AG04450 (cell line): ENCODE measurements at regions of chr15 and their contacts with region 1.

Region 1: GRCh38 chr15:72722071-72722696 is 36.2 kb downstream of the BBS4 start:
- DNase-seq: peak; percentile 47
- H3K4me3 ChIP-seq: no peak overlapping the region
- H3K27ac ChIP-seq: no peak overlapping the region
- H3K27me3 ChIP-seq: no peaks in the 10 kb centered on the region
- CTCF ChIP-seq: peak; percentile 79

Region 2: DNA sequence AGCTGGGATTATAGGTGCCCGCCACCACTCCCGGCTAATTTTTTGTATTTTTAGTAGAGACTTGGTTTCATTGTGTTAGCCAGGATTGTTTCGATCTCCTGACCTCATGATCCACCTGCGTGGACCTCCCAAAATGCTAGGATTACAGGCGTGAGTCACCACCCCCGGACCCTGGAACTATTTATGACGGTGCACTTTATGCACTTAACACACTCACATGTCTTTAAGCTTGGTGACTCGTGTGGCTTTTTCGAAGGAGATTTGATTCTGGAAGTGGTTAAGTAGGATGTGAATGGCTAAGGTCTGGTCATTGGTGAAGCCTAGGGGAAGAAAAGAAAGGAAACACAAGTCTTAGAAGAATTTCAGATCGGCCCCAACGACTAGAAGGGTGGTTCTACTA is 15.9 kb before region 1 on chr15:
- CTCF ChIA-PET with region 1: interaction called, 24 read pairs
- POLR2A ChIA-PET with region 1: interaction called, 4 read pairs
- DNase-seq: no peak
- H3K4me3 ChIP-seq: no peak overlapping the region
- H3K27ac ChIP-seq: no peak overlapping the region
- H3K27me3 ChIP-seq: no peaks in the 10 kb centered on the region
- CTCF ChIP-seq: no peak

Region 3: GRCh38 chr15:72740219-72740618 is 18.0 kb after region 1 on chr15:
- CTCF ChIA-PET with region 1: interaction called, 73 read pairs
- POLR2A ChIA-PET with region 1: no interaction called
- DNase-seq: no peak
- H3K4me3 ChIP-seq: no peak overlapping the region
- H3K27ac ChIP-seq: no peak overlapping the region
- H3K27me3 ChIP-seq: no peaks in the 10 kb centered on the region
- CTCF ChIP-seq: no peak

Region 4: DNA sequence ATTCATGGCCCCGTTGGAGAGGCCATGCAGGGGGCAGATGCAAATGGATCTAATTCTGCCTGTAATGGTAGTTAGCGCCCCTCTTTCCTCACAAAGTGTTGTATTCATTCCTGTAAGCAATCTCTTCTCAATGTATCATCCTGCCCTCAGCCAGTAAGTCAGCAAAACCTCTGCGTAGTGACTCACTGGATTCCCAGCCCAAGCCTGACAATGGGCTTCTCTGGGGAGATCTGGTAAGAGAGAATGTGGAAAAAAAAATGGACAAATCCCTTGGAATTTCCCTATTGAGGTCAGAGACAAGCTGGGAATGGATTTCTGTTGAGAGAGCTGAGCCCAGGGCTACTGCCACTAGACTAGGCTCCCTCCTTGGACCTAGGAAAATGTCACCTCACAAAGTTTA is 36.0 kb after region 1 on chr15:
- CTCF ChIA-PET with region 1: interaction called, 21 read pairs
- POLR2A ChIA-PET with region 1: no interaction called
- DNase-seq: peak; percentile 81
- H3K4me3 ChIP-seq: no peak overlapping the region
- H3K27ac ChIP-seq: peak overlapping the region; percentile 83
- H3K27me3 ChIP-seq: no peaks in the 10 kb centered on the region
- CTCF ChIP-seq: no peak

Region 5: GRCh38 chr15:72796515-72797337 is 74.5 kb after region 1 on chr15:
- CTCF ChIA-PET with region 1: interaction called, 10 read pairs
- POLR2A ChIA-PET with region 1: no interaction called
- DNase-seq: no peak
- H3K4me3 ChIP-seq: peak overlapping the region; percentile 55
- H3K27ac ChIP-seq: no peak overlapping the region
- H3K27me3 ChIP-seq: no peaks in the 10 kb centered on the region
- CTCF ChIP-seq: peak; percentile 29; the same call in 1 of the 2 replicates

Region 6: DNA sequence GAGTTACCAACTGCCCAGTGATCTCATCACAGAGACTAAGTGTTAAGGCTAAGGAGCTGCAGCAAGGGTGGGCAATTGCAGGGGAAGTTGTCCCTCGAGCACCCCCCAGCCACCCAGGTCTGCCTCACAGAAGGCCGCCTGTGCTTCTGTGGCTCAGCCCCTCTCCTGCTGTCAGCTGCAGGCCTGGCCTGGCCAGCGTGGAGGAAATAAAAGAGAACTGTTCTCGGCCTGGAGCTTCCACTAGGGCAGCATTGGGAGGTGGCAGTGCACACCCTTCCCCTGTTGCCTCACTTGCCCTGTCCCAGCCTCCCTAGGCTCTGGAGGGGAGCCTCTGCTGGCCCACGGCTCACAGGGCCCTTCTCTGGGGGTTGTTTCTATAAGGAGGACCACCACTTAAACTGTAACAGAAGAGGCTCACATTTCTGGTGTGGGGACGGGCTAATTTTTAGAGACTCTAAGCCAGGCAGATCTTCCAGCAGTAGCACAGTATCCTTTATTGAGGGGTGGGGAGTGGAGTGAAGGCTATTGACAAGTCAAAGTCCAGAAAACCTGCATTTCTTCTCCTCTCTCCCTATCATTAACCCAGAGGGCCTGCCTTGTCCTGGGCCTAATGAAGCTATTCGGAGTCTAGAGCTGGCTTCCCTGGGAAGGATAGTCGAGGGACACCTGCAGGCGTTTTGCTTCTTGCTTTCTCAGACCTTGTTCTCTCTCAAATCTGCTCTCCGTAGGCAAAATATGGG is 137.0 kb after region 1 on chr15:
- CTCF ChIA-PET with region 1: no interaction called
- POLR2A ChIA-PET with region 1: no interaction called
- DNase-seq: no peak
- H3K4me3 ChIP-seq: no peak overlapping the region
- H3K27ac ChIP-seq: no peak overlapping the region
- H3K27me3 ChIP-seq: no peaks in the 10 kb centered on the region
- CTCF ChIP-seq: no peak